Activated CD4-positive, alpha-beta T cell treated with anti-CD3 and anti-CD28 coated beads for 36 hours (primary cell): ENCODE measurements at regions of chr17 and their contacts with region 1.

Region 1: DNA sequence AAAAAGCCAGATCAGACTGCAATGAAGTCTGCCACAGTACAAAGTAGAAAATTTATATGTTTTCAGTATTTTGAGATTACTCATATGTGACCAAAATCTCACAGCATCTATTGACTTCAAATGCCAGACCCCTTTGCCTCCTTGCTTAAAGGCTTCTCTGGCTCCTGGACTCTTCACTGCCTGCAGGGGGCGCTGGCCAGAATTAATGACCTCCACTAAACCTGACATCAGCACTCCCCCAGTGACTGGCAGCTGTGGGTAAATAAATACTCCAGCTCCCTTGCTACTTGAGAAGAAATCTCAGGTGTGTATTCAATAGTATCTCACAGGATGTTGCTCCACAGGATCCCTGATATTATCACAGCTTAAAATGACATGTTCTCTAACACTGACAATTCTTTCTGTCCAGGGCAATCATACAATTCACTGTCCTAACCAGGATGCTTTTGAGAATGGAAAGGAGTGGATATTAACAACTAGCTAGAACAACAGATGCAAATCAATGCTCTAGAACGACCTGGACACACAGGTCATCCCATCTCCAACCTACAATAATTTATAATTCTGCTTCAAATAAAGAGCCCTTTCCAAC is 4.0 kb downstream of the BECN1 start:
- DNase-seq: peak; percentile 86
- ATAC-seq: peak; percentile 56
- H3K4me3 Mint-ChIP-seq: no peak overlapping the region
- H3K27ac Mint-ChIP-seq: no peak overlapping the region
- H3K4me1 Mint-ChIP-seq: peaks cover 28% of the 10 kb centered on the region
- H3K27me3 Mint-ChIP-seq: no peaks in the 10 kb centered on the region

Region 2: DNA sequence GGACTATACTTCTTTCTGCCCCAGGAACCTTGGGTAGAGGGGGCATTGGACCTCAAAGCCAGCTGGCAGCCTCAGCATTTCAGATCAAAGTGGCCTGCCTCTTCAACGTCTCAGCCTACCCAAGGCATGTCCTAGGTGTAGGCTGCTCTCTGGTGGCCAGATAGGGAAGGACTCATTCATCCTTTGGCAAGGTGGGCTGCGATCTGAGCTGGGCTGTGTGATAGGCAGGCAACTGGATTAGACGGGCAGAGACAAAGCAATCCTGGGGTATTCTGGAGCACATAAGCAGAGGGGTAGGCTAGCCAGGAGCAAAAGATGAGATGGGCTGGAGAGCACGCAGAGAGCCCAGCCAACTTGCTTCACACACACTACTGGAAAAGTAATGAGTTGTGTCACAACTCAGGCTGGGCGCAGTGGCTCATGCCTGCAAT is 292.8 kb before region 1 on chr17:
- CTCF ChIA-PET with region 1: no interaction called
- POLR2A ChIA-PET with region 1: no interaction called
- intact Hi-C with region 1: no loop called
- DNase-seq: peak; percentile 82
- ATAC-seq: peak; percentile 82
- H3K4me3 Mint-ChIP-seq: no peak overlapping the region
- H3K27ac Mint-ChIP-seq: no peak overlapping the region
- H3K4me1 Mint-ChIP-seq: peaks cover 37% of the 10 kb centered on the region
- H3K27me3 Mint-ChIP-seq: no peaks in the 10 kb centered on the region

Region 3: DNA sequence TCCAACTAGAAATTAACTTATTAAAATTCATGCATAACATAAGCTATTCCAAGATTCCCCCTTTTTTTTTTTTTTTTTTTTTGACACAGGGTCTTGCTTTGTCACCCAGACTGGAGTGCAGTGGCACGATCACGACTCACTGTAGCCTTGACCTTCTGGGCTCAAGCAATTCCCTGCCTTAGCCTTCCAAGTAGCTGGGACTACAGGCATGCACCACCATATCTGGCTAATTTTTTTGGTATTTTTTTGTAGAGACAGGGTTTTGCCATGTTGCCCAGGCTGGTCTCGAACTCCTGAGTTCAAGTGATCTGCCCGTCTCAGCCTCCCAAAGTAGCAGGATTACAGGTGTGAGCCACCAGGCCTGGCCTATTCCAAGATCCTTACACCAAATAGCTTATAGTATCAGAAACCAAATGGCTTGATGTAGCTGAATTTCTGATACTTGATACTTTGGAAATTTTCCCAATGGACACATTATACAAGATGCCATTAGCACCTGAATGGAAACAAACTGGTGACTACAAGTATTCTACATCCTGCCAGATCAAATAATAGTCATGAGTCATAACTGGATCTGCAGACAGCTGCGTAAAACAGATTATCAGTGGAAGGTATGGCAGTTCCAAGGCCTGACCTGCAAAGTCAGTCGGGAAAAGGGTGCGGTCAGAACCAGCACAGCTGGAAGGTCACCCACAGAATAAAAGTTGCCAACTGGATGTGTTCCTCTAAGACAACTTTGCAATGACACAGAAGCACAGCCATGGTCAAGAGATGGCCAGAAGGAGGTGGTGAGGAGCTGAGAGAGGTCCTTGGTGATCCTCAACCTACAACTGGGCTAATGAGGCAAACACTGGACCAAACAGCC is 196.1 kb before region 1 on chr17:
- CTCF ChIA-PET with region 1: no interaction called
- POLR2A ChIA-PET with region 1: no interaction called
- intact Hi-C with region 1: no loop called
- DNase-seq: no peak
- ATAC-seq: no peak
- H3K4me3 Mint-ChIP-seq: no peak overlapping the region
- H3K27ac Mint-ChIP-seq: no peak overlapping the region
- H3K4me1 Mint-ChIP-seq: peaks cover 2% of the 10 kb centered on the region
- H3K27me3 Mint-ChIP-seq: no peaks in the 10 kb centered on the region

Region 4: DNA sequence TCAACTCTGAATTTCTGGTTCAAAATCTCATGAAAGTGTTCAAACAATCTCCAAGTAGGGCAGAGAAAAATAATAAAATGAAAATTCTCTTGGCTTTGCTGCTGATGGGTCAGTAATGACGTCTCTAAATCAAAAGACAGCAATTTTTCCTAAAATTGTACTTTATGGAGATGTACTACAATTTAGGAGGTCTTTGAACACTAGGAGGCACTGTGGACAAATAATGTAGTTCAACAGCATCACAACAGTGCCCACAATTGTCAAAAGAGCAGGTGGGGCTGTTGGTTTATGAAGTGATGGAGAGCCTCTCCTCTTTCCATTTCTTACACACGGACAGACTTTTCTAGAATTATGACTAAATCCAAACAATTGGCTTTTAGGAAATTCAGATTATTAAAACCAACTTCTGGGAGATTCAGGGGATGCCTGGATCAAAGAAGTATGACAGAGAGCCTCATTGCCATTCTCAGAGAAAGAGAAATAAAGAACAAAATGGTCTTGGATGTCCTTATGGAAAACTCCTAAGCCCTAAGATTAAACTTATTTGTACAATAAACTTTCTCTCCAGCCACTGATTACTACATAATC is 99.0 kb before region 1 on chr17:
- CTCF ChIA-PET with region 1: interaction called, 4 read pairs
- POLR2A ChIA-PET with region 1: no interaction called
- intact Hi-C with region 1: loop called (anchors 1 to 5 kb)
- DNase-seq: peak; percentile 33
- ATAC-seq: peak; percentile 90
- H3K4me3 Mint-ChIP-seq: no peak overlapping the region
- H3K27ac Mint-ChIP-seq: no peak overlapping the region
- H3K4me1 Mint-ChIP-seq: peaks cover 2% of the 10 kb centered on the region
- H3K27me3 Mint-ChIP-seq: no peaks in the 10 kb centered on the region

Region 5: DNA sequence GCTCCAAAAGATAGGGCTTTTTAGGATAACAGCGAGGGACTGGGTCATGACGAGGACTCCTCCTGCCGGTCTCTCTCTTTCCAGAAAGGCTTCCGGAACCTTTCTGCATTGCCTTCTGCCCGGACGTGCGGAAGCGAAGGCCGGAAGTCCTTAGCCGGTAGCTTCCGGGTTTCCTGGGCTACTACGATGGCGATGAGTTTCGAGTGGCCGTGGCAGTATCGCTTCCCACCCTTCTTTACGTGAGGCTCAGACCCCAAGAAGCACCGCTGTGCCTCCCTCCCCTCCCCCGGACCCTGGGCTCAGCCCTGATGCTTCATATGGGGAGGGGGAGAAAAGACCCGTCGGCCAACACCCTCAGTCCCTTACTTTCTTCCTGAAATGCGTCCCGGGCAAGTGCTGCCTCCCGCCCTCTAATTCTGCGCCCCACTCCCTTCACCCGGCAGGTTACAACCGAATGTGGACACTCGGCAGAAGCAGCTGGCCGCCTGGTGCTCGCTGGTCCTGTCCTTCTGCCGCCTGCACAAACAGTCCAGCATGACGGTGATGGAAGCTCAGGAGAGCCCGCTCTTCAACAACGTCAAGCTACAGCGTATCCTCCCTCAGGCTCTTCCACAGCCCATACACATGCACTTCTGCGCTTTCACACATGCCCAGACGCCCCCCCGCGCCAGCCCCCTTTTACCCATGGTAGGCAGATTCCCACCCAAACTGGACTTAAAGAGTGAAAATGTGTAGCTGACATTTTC is 46.6 kb before region 1 on chr17 and contains the start of gene VPS25:
- CTCF ChIA-PET with region 1: interaction called, 7 read pairs
- POLR2A ChIA-PET with region 1: no interaction called
- intact Hi-C with region 1: loop called (anchors 1 to 5 kb)
- DNase-seq: peak; percentile 81
- ATAC-seq: peak; percentile 97
- H3K4me3 Mint-ChIP-seq: peak within 1 kb of the TSS; percentile 96
- H3K27ac Mint-ChIP-seq: peak within 1 kb of the TSS; percentile 95
- H3K4me1 Mint-ChIP-seq: peaks cover 22% of the 10 kb centered on the region
- H3K27me3 Mint-ChIP-seq: no peaks in the 10 kb centered on the region
- total RNA-seq, gene VPS25: 62.5 to 64.0 TPM

Region 6: DNA sequence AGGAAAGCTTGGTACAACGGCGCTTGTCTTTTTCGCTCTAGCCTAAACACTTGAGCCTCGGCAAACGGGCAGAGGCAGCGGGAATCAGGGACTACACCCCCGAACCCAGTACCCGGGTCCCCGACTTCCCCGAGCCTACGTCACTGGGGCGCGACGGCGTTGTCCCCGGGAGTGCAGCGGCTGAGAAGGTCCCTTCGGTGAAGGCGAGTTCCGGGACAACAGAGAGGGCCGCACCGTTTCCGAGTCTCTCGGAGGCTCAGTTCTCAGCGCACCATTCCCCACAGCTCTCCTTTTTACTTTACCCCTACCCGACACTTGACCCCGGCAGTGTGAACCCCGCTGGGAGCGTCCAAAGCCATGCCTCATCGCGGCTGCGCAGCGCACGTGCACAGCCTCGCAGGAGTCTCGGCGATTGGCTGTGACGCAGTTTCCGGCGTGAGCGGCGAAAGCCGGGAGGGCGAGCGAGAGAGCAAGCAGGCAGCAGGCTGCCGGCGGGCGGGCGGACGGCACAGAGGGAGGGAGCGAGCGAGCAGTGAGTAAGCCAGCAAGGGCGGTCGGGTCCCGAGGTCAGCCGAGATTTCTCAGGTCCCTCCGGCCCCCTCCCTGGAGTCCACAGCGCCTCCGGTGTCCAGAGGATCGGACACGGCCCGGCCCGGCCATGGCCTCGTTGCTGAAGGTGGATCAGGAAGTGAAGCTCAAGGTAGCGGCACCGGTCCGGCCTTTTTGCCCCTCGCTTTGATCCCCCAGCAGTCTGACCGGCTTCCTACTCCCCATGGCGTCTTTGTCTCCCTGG is 13.1 kb after region 1 on chr17 and contains the start of gene PSME3:
- CTCF ChIA-PET with region 1: interaction called, 25 read pairs
- POLR2A ChIA-PET with region 1: interaction called, 15 read pairs
- intact Hi-C with region 1: loop called in 1 of 2 experiments (anchors 1 kb)
- DNase-seq: peak; percentile 94
- ATAC-seq: peak; percentile 90
- H3K4me3 Mint-ChIP-seq: peak within 1 kb of the TSS; percentile 96
- H3K27ac Mint-ChIP-seq: peak within 1 kb of the TSS; percentile 98
- H3K4me1 Mint-ChIP-seq: peaks cover 18% of the 10 kb centered on the region
- H3K27me3 Mint-ChIP-seq: no peaks in the 10 kb centered on the region
- total RNA-seq, gene PSME3: 116 to 118 TPM

Region 7: GRCh38 chr17:42857389-42857788 is 37.3 kb after region 1 on chr17:
- CTCF ChIA-PET with region 1: no interaction called
- POLR2A ChIA-PET with region 1: no interaction called
- intact Hi-C with region 1: no loop called
- DNase-seq: no peak
- ATAC-seq: no peak
- H3K4me3 Mint-ChIP-seq: no peak overlapping the region
- H3K27ac Mint-ChIP-seq: no peak overlapping the region
- H3K4me1 Mint-ChIP-seq: no peaks in the 10 kb centered on the region
- H3K27me3 Mint-ChIP-seq: no peaks in the 10 kb centered on the region

Region 8: GRCh38 chr17:42980398-42981397 is 160.7 kb after region 1 on chr17 and contains the start of gene RUNDC1:
- CTCF ChIA-PET with region 1: no interaction called
- POLR2A ChIA-PET with region 1: no interaction called
- intact Hi-C with region 1: loop called in 1 of 2 experiments (anchors 2 kb)
- DNase-seq: peak; percentile 95
- ATAC-seq: peak; percentile 87
- H3K4me3 Mint-ChIP-seq: peak within 1 kb of the TSS; percentile 99
- H3K27ac Mint-ChIP-seq: peak within 1 kb of the TSS; percentile 98
- H3K4me1 Mint-ChIP-seq: peaks cover 32% of the 10 kb centered on the region
- H3K27me3 Mint-ChIP-seq: no peaks in the 10 kb centered on the region
- total RNA-seq, gene RUNDC1: 12.3 to 12.5 TPM

Region 9: DNA sequence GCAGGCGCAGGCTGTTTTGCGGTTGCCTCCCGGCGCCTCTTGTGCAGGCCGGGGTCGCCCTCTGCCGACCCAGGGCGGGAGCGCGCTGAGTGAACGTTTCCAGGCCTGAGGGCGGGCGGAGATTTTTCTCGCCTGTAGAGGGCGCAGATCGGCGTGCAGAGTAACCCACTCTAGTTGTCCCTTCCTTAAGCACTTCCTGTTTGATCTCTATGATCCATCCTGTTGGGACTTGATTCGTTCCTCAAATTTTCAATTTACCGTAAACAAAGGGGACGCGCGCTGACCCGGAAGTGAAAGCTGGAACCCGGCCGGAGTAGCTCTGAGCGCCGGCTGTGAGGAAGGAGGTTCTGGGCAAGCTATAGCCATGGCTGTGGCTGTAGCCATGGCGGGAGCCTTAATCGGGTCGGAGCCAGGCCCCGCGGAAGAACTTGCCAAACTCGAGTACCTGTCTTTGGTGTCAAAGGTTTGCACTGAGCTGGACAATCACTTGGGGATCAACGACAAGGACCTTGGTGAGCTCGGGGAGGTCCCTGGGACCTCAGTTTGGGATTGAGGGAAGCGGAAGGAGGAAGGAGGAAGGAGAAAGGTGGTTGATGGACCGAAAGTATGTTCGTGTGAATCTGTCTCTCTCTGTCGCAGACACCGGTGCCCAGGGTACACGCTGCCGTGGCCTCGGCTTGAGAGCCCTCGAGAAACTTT is 663.8 kb after region 1 on chr17 and contains the start of gene DHX8:
- CTCF ChIA-PET with region 1: no interaction called
- POLR2A ChIA-PET with region 1: no interaction called
- intact Hi-C with region 1: loop called in 1 of 2 experiments (anchors 5 kb)
- DNase-seq: peak; percentile 99
- ATAC-seq: peak; percentile 94
- H3K4me3 Mint-ChIP-seq: peak within 1 kb of the TSS; percentile 100
- H3K27ac Mint-ChIP-seq: peak within 1 kb of the TSS; percentile 99
- H3K4me1 Mint-ChIP-seq: peaks cover 19% of the 10 kb centered on the region
- H3K27me3 Mint-ChIP-seq: no peaks in the 10 kb centered on the region
- total RNA-seq, gene DHX8: 42.6 to 46.9 TPM